Aorta (tissue), 5 donors: ENCODE measurements at regions of chr9 and their contacts with region 1.

Region 1: GRCh38 chr9:94772639-94773303 is 46.3 kb downstream of the AOPEP start:
- DNase-seq: peak in 1 of 2 donors; percentile 56
- ATAC-seq: peak; percentile 22
- H3K4me3 ChIP-seq: no peak overlapping the region
- H3K27ac ChIP-seq: peak overlapping the region in 1 of 2 donors; percentile 91
- H3K4me1 ChIP-seq: peaks cover 2 to 5% of the 10 kb centered on the region in 2 donors
- H3K27me3 ChIP-seq: no peaks in the 10 kb centered on the region

Region 2: GRCh38 chr9:94681508-94681907 is 91.3 kb before region 1 on chr9:
- intact Hi-C with region 1: loop called in 1 of 2 experiments (anchors 5 kb)
- DNase-seq: peak; percentile 86 to 90
- ATAC-seq: peak; percentile 95
- H3K4me3 ChIP-seq: no peak overlapping the region
- H3K27ac ChIP-seq: peak overlapping the region in 1 of 2 donors; percentile 68
- H3K4me1 ChIP-seq: no peaks in the 10 kb centered on the region
- H3K27me3 ChIP-seq: no peaks in the 10 kb centered on the region